ENCODE measurements at regions of chr17 and their contacts with region 1.

Region 1: GRCh38 chr17:7329374-7329996 is 350 bp upstream of the NEURL4 start:
- DNase-seq: peak; percentile 97
- ATAC-seq: peak; percentile 75
- H3K4me3 ChIP-seq: peak overlapping the region; percentile 99
- H3K27ac ChIP-seq: peak overlapping the region; percentile 94
- H3K4me1 ChIP-seq: peaks cover 27% of the 10 kb centered on the region
- H3K27me3 ChIP-seq: no peaks in the 10 kb centered on the region
- CTCF ChIP-seq: no peak
- EP300 ChIP-seq: 0 out of 4 replicates have a peak, but pooled peaks of 1 of the 2 experiments have one; percentile 25
- POLR2A ChIP-seq: peak; percentile 77
- RAD21 ChIP-seq: no peak

Region 2: GRCh38 chr17:7306911-7307686 is 22.4 kb before region 1 on chr17 and contains the start of gene EIF5A:
- CTCF ChIA-PET with region 1: interaction called, 7 read pairs
- POLR2A ChIA-PET with region 1: interaction called, 8 read pairs
- RAD21 ChIA-PET with region 1: interaction called, 5 read pairs
- SMC1A ChIA-PET with region 1: interaction called, 3 read pairs
- in situ Hi-C with region 1: no loop called
- intact Hi-C with region 1: loop called (anchors 2 kb)
- DNase-seq: peak; percentile 100
- ATAC-seq: peak; percentile 82
- H3K4me3 ChIP-seq: peak within 1 kb of the TSS; percentile 99
- H3K27ac ChIP-seq: peak within 1 kb of the TSS; percentile 99
- H3K4me1 ChIP-seq: peaks cover 12% of the 10 kb centered on the region
- H3K27me3 ChIP-seq: no peaks in the 10 kb centered on the region
- CTCF ChIP-seq: no peak
- EP300 ChIP-seq: 0 out of 4 replicates have a peak, but pooled peaks of 1 of the 2 experiments have one; percentile 54
- POLR2A ChIP-seq: peak; percentile 84
- RAD21 ChIP-seq: no peak
- polyA plus RNA-seq, gene EIF5A: 26.5 to 85.5 TPM

Region 3: DNA sequence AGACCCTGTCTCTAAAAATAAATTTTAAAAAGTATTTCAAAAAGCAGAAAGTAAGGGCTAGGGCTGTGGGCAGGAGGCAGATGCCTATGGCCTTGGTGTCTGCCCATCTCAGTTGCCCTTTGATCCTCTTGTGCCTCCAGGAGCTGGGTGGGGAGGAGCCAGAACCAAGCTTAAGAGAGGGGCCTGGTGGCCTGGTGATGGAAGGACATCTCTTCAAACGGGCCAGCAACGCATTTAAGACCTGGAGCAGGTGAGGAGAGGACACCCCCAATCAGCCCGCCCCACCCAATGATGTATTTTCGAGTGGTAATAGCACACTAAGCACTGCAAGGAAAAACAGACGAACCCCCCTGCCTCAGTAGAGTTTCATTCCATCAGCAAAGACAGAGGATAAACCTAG is 14.9 kb after region 1 on chr17:
- CTCF ChIA-PET with region 1: interaction called, 49 read pairs
- POLR2A ChIA-PET with region 1: interaction called, 52 read pairs
- RAD21 ChIA-PET with region 1: interaction called, 45 read pairs
- SMC1A ChIA-PET with region 1: interaction called, 18 read pairs
- in situ Hi-C with region 1: no loop called
- intact Hi-C with region 1: loop called (anchors 1 kb)
- DNase-seq: no peak
- ATAC-seq: no peak
- H3K4me3 ChIP-seq: no peak overlapping the region
- H3K27ac ChIP-seq: no peak overlapping the region
- H3K4me1 ChIP-seq: no peaks in the 10 kb centered on the region; the same call in 1 of the 2 replicates
- H3K27me3 ChIP-seq: no peaks in the 10 kb centered on the region
- CTCF ChIP-seq: no peak
- EP300 ChIP-seq: no peak
- POLR2A ChIP-seq: no peak
- RAD21 ChIP-seq: no peak

Region 4: DNA sequence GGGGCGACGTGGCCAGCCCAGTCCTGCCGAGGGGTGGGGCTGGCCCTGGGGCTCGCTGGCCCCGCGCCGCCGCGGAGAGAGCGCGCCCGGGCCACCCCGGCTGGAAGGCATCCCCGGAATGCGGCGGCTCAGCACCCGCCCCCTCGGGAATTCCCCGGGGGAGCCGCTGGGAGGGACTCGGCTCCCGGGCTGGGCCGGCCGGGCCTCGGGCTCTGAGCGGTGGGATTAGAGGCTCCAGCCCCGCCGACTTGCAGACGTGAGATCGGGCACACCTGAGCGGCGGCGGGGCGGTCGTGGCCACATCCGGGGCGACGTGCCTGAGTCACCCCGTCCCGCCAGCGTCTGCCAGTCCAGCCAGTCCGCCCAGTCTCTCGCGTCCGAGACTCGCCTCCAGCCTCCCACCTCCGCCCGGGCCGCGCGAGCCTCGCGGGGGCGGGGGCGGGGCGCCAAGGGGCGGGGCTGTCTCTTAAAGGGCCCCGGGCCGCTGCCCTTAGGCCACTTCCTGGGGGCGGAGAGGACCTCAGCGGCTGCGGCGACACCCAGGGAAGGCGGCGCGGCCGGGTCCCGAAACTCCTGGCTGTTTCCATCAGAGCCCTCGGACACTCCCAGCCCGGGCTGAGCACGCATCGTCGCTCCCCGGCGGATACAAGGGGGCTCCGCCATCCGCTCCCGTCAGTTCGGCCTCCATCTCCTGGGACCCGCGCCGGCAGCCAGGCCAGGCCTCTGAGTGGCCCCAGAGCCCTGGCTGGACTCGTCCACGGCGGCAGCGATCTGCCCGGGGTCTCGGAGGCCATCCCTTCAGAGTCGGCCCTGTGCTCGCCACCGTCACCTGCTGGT is 22.4 kb after region 1 on chr17 and contains the start of gene KCTD11:
- CTCF ChIA-PET with region 1: interaction called, 49 read pairs
- POLR2A ChIA-PET with region 1: interaction called, 52 read pairs
- RAD21 ChIA-PET with region 1: interaction called, 45 read pairs
- SMC1A ChIA-PET with region 1: interaction called, 10 read pairs
- in situ Hi-C with region 1: no loop called
- intact Hi-C with region 1: no loop called
- DNase-seq: no peak
- ATAC-seq: peak; percentile 81
- H3K4me3 ChIP-seq: peak within 1 kb of the TSS; percentile 88
- H3K27ac ChIP-seq: peak within 1 kb of the TSS; percentile 59
- H3K4me1 ChIP-seq: peaks cover 23% of the 10 kb centered on the region
- H3K27me3 ChIP-seq: no peaks in the 10 kb centered on the region
- CTCF ChIP-seq: peak in 2 of 3 experiments; percentile 55 to 59; a peak in 3 of 6 replicates
- EP300 ChIP-seq: no peak
- POLR2A ChIP-seq: peak; percentile 81
- RAD21 ChIP-seq: 0 out of 2 replicates have a peak, but pooled peaks have one; percentile 27
- polyA plus RNA-seq, gene KCTD11: 0.05 to 0.09 TPM

Region 5: DNA sequence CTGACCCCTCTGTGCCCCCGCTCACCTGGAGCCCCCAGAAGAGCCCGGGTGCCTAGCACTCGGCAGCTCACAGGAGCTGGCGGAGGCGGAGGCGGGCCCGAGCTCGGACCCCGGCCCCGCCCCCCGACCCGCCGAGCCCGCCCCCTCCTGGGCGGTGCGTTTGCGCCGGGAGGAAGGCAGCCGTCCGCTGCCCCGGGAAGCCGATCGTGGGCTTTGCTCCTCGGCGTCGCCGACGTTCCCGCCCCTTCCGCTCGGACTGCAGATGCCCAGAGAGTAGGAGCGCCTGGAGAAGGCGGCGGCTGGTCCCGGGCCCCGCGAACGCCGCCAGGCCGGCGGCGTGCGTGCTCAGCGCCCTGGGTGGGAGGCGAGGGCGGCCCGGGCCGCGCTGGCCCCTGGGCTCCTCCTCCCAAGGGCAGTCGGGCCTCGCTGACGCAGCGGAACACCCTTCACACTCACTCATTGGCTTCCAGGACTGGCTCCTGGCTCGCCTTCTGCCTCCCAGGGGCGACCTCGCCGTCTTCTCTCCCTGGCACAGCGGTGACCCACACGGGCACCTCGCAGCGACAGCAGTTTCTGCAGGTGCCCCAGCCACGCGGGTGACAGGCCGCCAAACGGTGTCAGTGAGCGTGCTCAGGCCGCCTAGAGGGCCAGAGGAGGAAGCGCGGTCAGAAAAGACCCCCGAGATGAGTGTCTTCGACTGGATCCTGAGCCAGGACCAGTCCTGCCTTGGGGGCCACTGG is 65.1 kb after region 1 on chr17 and contains the start of gene PLSCR3:
- CTCF ChIA-PET with region 1: no interaction called
- POLR2A ChIA-PET with region 1: no interaction called
- RAD21 ChIA-PET with region 1: no interaction called
- SMC1A ChIA-PET with region 1: no interaction called
- in situ Hi-C with region 1: no loop called
- intact Hi-C with region 1: no loop called
- DNase-seq: peak; percentile 26
- ATAC-seq: peak; percentile 96
- H3K4me3 ChIP-seq: peak within 1 kb of the TSS; percentile 80
- H3K27ac ChIP-seq: peak within 1 kb of the TSS; percentile 58
- H3K4me1 ChIP-seq: no peaks in the 10 kb centered on the region
- H3K27me3 ChIP-seq: no peaks in the 10 kb centered on the region
- CTCF ChIP-seq: peak; percentile 7 to 56 (median 44); a peak in 4 of 6 replicates
- EP300 ChIP-seq: no peak
- POLR2A ChIP-seq: peak; percentile 83
- RAD21 ChIP-seq: no peak
- polyA plus RNA-seq, gene PLSCR3: 12.7 to 12.8 TPM